ENCODE measurements at regions of chr10 and their contacts with region 1.

Region 1: DNA sequence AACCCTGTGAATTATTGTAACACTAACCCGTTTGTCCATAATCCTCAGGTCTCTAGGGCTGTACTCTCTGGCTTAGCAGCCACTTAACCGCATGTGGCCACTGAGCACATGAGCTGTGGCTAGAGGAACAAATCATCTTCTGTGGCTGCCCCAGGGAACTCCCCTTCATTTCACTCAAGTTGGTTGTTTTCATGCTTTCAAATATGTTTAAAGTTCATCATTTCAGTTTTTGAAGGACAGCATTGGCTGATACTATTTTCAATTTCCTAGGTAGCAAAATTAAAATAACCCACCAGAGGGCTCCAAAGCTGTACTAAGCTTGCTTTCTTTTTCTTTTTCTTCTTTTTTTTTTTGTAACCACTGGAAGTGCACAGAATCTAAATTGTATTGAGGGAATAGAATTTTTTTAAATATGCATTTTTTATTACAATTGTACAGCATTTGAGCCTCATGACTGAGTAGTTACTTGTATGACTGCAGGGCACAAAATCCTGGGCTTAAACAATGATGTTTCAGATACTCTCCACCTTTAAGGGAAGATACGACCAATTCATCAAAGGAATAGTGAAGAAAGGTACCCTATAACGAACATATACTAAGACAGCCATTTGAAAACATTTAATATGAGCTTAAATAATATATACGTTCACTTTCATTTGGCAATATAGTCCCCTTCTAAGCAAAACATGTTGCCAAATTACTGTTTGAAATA is 38.6 kb downstream of the MRC1 start:
- DNase-seq: peak; percentile 32
- H3K4me3 ChIP-seq: no peak overlapping the region; a peak in 1 of 4 replicates
- H3K27ac ChIP-seq: no peak overlapping the region
- H3K4me1 ChIP-seq: peaks cover 0 to 5% of the 10 kb centered on the region in 2 experiments; a peak in 3 of 4 replicates
- H3K27me3 ChIP-seq: no peaks in the 10 kb centered on the region
- CTCF ChIP-seq: peak; percentile 71
- EP300 ChIP-seq: no peak
- RAD21 ChIP-seq: peak; percentile 76

Region 2: GRCh38 chr10:17836942-17837341 is 10.8 kb before region 1 on chr10:
- CTCF ChIA-PET with region 1: interaction called, 13 read pairs
- POLR2A ChIA-PET with region 1: no interaction called
- DNase-seq: no peak
- H3K4me3 ChIP-seq: peak overlapping the region; percentile 33 to 42; a peak in 2 of 4 replicates
- H3K27ac ChIP-seq: peak overlapping the region; percentile 20 to 61; a peak in 3 of 4 replicates
- H3K4me1 ChIP-seq: peaks cover 14 to 15% of the 10 kb centered on the region in 2 experiments
- H3K27me3 ChIP-seq: no peaks in the 10 kb centered on the region
- CTCF ChIP-seq: no peak
- EP300 ChIP-seq: no peak
- RAD21 ChIP-seq: no peak

Region 3: GRCh38 chr10:17965649-17966235 is 118.0 kb after region 1 on chr10:
- CTCF ChIA-PET with region 1: no interaction called
- POLR2A ChIA-PET with region 1: no interaction called
- DNase-seq: no peak
- H3K4me3 ChIP-seq: no peak overlapping the region
- H3K27ac ChIP-seq: no peak overlapping the region
- H3K4me1 ChIP-seq: no peaks in the 10 kb centered on the region
- H3K27me3 ChIP-seq: no peaks in the 10 kb centered on the region
- CTCF ChIP-seq: no peak
- EP300 ChIP-seq: no peak
- RAD21 ChIP-seq: no peak

Region 4: DNA sequence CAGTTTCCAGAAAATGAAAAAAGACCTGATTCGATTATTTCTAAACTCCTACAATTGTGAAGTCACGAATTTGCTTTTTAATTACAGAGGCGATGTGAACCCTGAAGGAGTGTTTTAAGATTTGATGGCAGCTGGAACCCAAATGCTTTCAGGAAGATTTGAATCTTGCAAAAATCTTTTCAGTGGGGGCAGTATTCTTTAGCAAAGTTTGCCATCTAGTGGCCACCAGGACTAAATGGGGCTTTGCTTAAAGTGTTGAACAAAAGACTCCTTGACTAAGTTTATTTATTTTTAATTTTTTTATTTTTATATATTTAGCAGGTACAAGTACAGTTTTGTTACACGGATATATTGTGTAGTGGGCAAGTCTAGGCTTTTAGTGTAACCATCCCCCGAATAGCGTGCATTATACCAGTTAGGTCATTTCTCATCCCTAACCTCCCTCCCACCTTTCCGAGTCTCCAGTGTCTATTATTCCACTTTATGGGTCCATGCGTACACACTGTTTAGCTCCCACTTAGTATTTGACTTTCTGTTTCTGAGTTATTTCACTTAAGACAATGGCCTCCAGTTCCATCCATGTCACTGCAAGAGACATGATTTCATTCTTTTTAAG is 391.2 kb after region 1 on chr10:
- CTCF ChIA-PET with region 1: interaction called, 33 read pairs
- POLR2A ChIA-PET with region 1: no interaction called
- DNase-seq: peak; percentile 46
- H3K4me3 ChIP-seq: no peak overlapping the region; a peak in 1 of 4 replicates
- H3K27ac ChIP-seq: no peak overlapping the region
- H3K4me1 ChIP-seq: peaks cover 0 to under 1% of the 10 kb centered on the region in 2 experiments; a peak in 1 of 4 replicates
- H3K27me3 ChIP-seq: no peaks in the 10 kb centered on the region
- CTCF ChIP-seq: peak; percentile 71
- EP300 ChIP-seq: no peak
- RAD21 ChIP-seq: peak; percentile 82

Measured in SK-N-SH (cell line).